Cardiac septum (tissue), 1 donor: ENCODE measurements at regions of chr11 and their contacts with region 1.

Region 1: GRCh38 chr11:73965076-73965860 is 14.4 kb downstream of the DNAJB13 start:
- DNase-seq: peak; percentile 43

Region 2: GRCh38 chr11:73866586-73866996 is 98.7 kb before region 1 on chr11:
- intact Hi-C with region 1: no loop called
- DNase-seq: no peak

Region 3: DNA sequence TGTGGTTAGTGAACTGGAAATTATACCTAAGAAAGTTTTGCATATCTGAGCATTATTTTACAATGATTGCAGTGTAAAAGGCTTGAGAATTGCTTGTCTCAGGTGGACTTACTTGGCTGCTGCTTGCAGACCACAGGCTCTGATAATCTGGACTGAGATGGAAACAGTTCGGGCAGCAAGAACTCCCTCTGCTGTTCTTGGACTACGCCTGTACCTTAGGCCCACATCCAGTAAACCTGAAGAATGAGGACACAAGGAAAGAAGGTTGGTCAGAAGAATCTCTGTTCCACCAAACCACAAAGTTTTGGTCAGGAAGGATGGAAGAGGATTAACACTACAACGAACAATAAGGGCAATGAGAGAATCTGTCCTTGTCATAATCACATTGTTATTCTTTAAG is 125.4 kb after region 1 on chr11:
- intact Hi-C with region 1: loop called (anchors 10 kb)
- DNase-seq: no peak